Naive thymus-derived CD8-positive, alpha-beta T cell (primary cell): ENCODE measurements at regions of chr16 and their contacts with region 1.

Region 1: DNA sequence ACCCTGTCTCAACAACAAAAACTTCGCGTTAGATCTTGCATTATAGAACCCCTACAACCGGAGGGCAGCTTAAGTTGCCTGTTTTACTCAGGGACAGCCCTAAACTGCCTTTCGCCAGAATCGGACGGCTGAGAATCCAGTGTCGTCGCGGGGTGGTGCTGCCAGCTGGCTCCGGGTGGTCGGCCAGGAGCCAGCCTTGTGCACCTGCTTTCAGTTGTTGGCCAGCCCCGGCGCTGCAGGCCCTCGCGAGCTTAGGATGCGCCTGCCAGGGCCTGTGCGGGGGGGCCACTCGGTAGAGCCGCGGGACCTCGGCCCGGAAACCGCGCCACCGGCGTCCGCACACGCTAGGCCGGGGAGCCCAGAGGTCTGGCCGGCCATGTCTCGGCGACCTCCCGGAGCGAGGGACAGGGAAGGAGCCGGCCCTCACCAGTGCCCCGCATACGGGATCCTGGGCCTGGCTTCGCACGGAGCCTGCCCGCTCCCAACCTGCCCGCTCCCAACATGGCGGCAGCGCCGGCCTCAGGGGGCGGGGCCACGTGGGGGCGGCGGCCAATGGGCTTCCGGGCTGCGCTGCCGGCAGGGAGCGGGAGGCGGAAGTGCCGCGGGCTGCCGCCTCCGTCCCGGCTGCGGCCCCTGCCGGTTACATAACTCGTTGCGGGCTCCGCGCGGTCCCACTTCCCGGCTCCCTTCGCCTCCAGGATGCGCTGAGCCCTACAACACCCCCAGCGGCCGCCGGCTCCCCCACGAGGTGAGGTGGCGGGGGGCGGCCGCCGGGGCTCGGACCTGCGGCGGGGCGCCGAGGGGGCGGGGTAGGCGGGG is 14.2 kb downstream of the NAA60 start:
- DNase-seq: peak; percentile 85 to 93 (median 91)
- ATAC-seq: peak; percentile 83 to 85
- H3K4me3 Mint-ChIP-seq: peak overlapping the region; percentile 71 to 89 (median 84)
- H3K27ac Mint-ChIP-seq: peak overlapping the region; percentile 84 to 96 (median 92)
- H3K4me1 Mint-ChIP-seq: peaks cover 26 to 52% (median 43%) of the 10 kb centered on the region in 4 donors
- H3K27me3 Mint-ChIP-seq: no peaks in the 10 kb centered on the region

Region 2: DNA sequence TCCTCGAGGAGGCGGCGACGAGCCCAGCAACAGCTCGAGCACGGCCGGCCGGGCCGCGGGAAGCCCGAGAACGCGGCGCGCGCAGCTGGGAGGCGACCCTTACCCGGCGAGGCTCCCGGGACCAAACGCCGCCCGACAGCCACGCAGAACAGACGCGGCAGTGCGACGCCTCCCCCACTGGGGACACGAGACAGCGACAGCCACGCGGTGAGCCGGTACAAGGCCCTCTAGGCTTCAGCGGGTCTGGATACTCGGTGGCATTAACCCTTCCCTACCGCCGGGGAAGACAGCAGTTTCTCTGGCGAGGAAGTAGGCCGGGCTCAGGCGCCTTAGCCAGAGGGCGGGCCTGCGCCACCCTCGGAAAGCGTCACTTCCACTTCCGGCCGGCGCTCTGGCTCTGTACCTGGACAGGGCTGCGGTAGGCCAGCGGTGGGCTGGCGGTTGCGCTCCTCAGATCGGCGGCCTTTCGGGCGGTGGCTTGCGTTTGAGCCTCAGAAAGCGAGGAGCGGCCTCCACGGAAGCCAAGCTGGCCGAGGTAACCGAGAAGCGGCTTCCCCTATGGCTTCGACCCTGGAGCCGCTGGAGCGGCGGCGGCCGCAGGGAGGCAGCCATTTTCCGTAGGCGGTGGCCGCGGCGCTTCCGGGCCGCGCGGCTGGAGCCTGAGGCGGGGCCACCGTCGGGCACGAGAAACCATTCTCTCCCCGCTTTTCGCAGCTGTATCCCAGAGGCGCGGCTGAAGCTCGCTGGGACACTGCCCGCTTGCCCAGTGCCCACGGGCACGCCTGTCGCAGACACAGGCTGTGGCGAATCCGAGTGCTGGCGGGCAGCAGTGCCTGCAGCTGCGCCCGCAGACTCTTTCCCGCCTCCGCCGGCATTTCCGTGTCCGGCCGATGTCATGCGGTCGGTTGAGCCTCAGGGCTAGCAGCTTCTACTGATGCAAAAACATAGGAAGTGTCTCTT is 152.3 kb before region 1 on chr16 and contains the starts of genes TIGD7 and ZNF75A:
- POLR2A ChIA-PET with region 1: interaction called, 17 read pairs
- DNase-seq: peak; percentile 67 to 93 (median 84)
- ATAC-seq: peak; percentile 93 to 96
- H3K4me3 Mint-ChIP-seq: peak within 1 kb of the TSS; percentile 75 to 90 (median 84)
- H3K27ac Mint-ChIP-seq: peak within 1 kb of the TSS; percentile 37 to 94 (median 84)
- H3K4me1 Mint-ChIP-seq: peaks cover 9 to 31% (median 20%) of the 10 kb centered on the region in 4 donors
- H3K27me3 Mint-ChIP-seq: no peaks in the 10 kb centered on the region
- polyA plus RNA-seq, gene TIGD7: 5.8 to 7.0 (median 5.8) TPM
- polyA plus RNA-seq, gene ZNF75A: 18.2 to 32.3 (median 23.6) TPM

Region 3: DNA sequence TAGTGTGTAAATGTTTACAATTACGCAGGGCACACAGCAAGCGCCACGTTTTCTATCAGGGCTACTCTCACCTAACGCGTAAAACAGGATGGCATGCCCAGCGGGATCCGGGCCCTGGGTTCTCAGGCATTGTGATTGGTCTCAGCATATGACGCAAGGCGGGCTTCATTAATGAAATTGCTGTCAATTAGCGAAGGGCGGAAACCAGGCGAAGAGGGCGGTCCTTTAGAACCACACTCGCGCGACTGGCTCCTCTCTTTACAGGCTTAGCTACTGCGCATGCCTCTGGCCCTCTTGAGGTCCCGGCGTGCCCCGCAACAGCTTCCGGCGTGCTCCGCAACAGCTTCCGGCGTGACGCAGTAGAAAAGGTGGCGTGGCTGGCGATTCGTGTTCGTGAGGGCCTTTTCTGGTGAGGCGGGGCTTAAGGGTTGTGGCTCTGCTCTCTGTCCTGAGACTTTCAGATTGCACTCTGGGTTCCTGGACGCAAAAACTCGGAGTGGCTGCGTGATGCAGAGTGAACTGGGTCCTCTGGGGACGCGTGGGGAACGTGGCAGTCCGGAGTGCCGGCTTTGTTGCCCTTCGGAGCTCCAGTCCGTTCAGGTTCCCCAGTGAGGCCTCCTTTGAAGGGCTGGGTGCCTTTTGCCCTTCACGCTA is 92.7 kb before region 1 on chr16:
- POLR2A ChIA-PET with region 1: interaction called, 11 read pairs
- DNase-seq: peak; percentile 69 to 96 (median 89)
- ATAC-seq: peak; percentile 93
- H3K4me3 Mint-ChIP-seq: peak overlapping the region; percentile 77 to 93 (median 86)
- H3K27ac Mint-ChIP-seq: peak overlapping the region; percentile 84 to 96 (median 92)
- H3K4me1 Mint-ChIP-seq: peaks cover 4 to 12% (median 6%) of the 10 kb centered on the region in 4 donors
- H3K27me3 Mint-ChIP-seq: peaks cover 13 to 19% (median 15%) of the 10 kb centered on the region in 5 donors

Region 4: GRCh38 chr16:3400779-3401688 is 56.6 kb before region 1 on chr16 and contains the starts of genes ZNF174 and ZSCAN32:
- POLR2A ChIA-PET with region 1: interaction called, 33 read pairs
- DNase-seq: peak; percentile 94 to 99 (median 98)
- ATAC-seq: peak; percentile 95 to 97
- H3K4me3 Mint-ChIP-seq: peak within 1 kb of the TSS; percentile 88 to 97 (median 95)
- H3K27ac Mint-ChIP-seq: peak within 1 kb of the TSS; percentile 85 to 96 (median 90)
- H3K4me1 Mint-ChIP-seq: peaks cover 29 to 70% (median 55%) of the 10 kb centered on the region in 4 donors
- H3K27me3 Mint-ChIP-seq: no peaks in the 10 kb centered on the region
- polyA plus RNA-seq, gene ZNF174: 12.3 to 18.8 (median 14.0) TPM
- polyA plus RNA-seq, gene ZSCAN32: 8.6 to 20.8 (median 19.0) TPM

Region 5: GRCh38 chr16:3443108-3444031 is 14.3 kb before region 1 on chr16 and contains the starts of genes NAA60 and ZNF597:
- POLR2A ChIA-PET with region 1: interaction called, 19 read pairs
- DNase-seq: peak; percentile 54 to 89 (median 80)
- ATAC-seq: peak; percentile 93 to 97
- H3K4me3 Mint-ChIP-seq: peak within 1 kb of the TSS; percentile 92 to 99 (median 95)
- H3K27ac Mint-ChIP-seq: peak within 1 kb of the TSS; percentile 88 to 99 (median 96)
- H3K4me1 Mint-ChIP-seq: peaks cover 5 to 48% (median 28%) of the 10 kb centered on the region in 4 donors
- H3K27me3 Mint-ChIP-seq: no peaks in the 10 kb centered on the region
- polyA plus RNA-seq, gene NAA60: 36.9 to 56.1 (median 44.4) TPM
- polyA plus RNA-seq, gene ZNF597: 1.1 to 2.3 (median 1.9) TPM

Region 6: DNA sequence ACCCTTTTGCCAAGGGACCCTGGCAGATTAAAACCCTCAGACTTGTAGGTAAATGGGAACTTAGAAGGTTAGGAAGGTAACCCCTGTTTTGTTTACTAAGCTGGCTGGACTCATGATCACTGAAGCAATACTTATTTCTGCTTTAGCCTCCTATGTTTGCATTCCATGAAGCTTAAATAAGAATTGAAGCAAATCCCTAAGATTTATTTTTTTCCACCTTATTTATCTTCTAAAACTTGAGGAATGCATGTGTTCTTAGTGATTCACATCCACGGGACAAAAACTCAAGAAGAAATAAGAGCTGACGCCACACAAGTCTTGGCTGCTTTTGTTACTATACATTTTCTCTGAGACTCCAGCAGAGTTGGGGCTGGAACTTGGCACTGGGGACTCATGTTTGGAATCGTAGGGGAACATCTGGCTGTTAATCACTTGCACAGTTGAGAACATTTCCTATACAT is 78.7 kb after region 1 on chr16:
- POLR2A ChIA-PET with region 1: no interaction called
- DNase-seq: no peak
- ATAC-seq: no peak
- H3K4me3 Mint-ChIP-seq: no peak overlapping the region
- H3K27ac Mint-ChIP-seq: peak overlapping the region in 7 of 10 donors; percentile 22 to 93 (median 63)
- H3K4me1 Mint-ChIP-seq: peaks cover 3 to 23% (median 11%) of the 10 kb centered on the region in 4 donors
- H3K27me3 Mint-ChIP-seq: no peaks in the 10 kb centered on the region